Endothelial cell of umbilical vein (primary cell): ENCODE measurements at regions of chr22 and their contacts with region 1.

Region 1: DNA sequence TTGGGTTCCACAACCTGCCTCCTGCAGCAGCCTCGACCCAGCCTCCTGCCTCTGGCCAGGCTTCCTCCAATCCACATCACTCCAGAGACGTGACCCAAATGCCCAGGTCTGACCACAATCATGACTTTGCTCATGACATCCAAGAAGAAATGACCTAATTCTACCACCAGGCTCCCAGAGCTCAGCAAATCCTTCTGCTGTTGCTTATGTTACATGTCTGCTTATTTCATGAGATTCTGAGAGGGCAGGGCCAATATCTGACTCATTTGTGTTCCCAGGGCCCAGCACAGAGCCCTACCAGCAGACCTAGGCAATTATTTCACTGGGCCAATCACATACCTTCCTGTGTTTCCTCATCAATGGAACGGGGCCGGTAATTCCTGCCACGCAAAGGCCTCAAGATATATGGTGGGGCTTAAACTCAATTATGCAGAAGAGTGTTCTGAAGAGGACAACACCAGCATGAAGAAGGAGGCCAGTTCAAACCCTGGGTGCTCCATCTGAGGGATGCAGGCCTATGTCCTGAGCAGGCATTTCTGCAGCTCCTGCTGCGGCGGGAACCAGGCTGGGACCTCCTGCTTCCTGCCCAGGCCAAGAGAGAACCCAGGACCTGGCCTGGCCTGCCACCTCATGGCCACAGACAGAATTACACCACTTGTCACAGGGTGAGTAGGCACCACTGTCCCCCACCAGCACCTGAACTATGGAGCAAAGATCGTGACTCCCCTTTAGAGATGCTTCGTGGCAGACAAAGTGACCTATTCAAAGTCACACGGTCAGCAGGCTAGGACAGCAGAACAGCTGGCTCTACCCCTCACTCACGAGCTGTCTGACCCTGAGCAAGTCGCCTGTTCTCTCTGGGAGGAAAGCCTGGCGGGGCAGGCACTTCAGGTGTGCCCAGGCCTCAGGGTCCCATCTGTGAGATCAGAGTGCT is 5.9 kb downstream of the CENPM start:
- DNase-seq: peak; percentile 75
- H3K4me3 ChIP-seq: no peak overlapping the region
- H3K27ac ChIP-seq: no peak overlapping the region
- H3K4me1 ChIP-seq: peaks cover 29% of the 10 kb centered on the region
- H3K27me3 ChIP-seq: no peaks in the 10 kb centered on the region
- CTCF ChIP-seq: peak; percentile 83 to 89
- POLR2A ChIP-seq: no peak

Region 2: GRCh38 chr22:41739576-41739975 is 201.5 kb before region 1 on chr22:
- CTCF ChIA-PET with region 1: interaction called, 23 read pairs
- POLR2A ChIA-PET with region 1: no interaction called
- dilution Hi-C with region 1: no loop called
- intact Hi-C with region 1: no loop called
- DNase-seq: no peak
- H3K4me3 ChIP-seq: no peak overlapping the region
- H3K27ac ChIP-seq: no peak overlapping the region
- H3K4me1 ChIP-seq: no peaks in the 10 kb centered on the region
- H3K27me3 ChIP-seq: peaks cover 5 to 11% of the 10 kb centered on the region in 2 experiments
- CTCF ChIP-seq: no peak
- POLR2A ChIP-seq: no peak

Region 3: DNA sequence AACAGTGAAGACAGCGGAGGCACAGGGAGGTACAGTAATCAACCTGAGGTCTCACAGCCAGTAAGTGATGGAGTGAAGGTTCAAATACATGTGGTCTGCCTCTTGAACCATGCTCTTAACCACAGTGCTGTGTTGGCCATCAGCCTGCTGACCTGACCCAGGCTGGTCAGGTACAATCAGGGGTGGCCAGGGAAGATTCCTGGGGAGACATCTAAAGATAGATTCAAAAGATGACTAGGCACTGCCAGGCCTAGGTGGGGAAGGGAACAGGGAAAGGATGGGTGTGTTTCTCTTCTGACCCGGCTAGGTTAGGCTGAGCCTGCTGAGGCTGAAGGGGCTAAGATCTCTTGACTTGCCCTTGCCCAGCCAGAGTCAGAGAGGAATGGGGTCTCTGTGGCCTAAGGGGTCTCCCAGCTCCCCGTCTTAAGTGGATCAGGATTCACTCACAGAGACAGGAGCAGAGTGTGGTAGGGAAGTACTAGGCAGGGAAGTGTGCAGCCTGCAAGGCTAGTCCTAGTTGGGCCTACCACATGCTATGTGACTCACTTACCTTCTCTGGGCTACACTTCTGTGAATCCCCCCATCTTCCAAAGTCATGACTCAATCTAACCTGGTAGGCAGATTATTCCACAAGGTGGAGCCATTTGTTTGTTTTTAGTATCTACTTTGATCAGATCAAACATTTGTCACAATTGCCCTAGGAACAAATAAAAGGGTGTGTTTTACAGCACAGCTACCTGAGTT is 118.6 kb before region 1 on chr22:
- CTCF ChIA-PET with region 1: interaction called, 55 read pairs
- POLR2A ChIA-PET with region 1: no interaction called
- dilution Hi-C with region 1: no loop called
- intact Hi-C with region 1: loop called (anchors 1 kb)
- DNase-seq: peak; percentile 65
- H3K4me3 ChIP-seq: no peak overlapping the region
- H3K27ac ChIP-seq: no peak overlapping the region
- H3K4me1 ChIP-seq: peaks cover 3% of the 10 kb centered on the region
- H3K27me3 ChIP-seq: no peaks in the 10 kb centered on the region
- CTCF ChIP-seq: peak; percentile 17 to 29
- POLR2A ChIP-seq: no peak

Region 4: DNA sequence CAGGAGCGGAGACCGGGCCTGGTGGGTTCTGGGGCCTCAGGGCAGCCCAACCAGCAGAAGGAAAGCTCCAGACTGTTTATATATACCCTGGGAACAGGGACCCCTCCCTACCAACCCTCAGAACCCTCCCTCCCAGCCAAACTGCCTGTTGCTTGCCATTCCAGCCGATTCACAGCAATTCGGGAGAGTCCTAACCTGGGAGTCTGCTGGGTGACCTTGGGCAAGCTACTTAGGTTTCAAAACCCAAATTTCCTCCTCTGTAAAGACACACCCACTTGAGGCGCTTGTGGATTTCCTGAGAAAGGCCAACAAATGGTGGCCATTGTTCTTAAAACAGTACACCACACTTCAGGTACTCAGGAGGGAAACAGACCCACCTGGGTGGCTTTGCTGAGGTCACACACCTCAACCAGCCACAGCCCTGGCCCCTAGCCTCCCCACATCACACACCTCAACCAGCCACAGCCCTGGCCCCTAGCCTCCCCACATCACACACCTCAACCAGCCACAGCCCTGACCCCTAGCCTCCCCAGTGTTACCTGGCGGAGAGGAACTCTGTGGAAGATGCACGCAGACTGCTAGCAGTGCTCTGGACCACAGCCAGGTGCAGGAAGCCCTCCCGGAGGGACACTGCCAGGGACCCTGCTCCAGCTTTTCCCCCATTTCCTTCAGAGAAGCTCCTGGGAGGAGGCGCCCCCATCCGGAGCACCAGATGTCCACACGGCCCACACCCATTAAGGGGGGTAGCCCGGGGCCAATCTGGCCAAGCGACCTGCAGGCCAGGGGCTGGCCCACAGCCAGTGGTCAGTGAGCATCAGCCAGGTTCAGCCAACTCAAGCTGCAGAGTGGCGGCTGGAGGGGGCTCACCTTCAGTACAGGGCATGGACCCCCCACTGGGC is 32.4 kb before region 1 on chr22:
- CTCF ChIA-PET with region 1: interaction called, 16 read pairs
- POLR2A ChIA-PET with region 1: no interaction called
- dilution Hi-C with region 1: no loop called
- intact Hi-C with region 1: no loop called
- DNase-seq: no peak
- H3K4me3 ChIP-seq: no peak overlapping the region
- H3K27ac ChIP-seq: no peak overlapping the region
- H3K4me1 ChIP-seq: peaks cover 6% of the 10 kb centered on the region
- H3K27me3 ChIP-seq: peaks cover 29 to 41% of the 10 kb centered on the region in 2 experiments
- CTCF ChIP-seq: no peak
- POLR2A ChIP-seq: no peak

Region 5: DNA sequence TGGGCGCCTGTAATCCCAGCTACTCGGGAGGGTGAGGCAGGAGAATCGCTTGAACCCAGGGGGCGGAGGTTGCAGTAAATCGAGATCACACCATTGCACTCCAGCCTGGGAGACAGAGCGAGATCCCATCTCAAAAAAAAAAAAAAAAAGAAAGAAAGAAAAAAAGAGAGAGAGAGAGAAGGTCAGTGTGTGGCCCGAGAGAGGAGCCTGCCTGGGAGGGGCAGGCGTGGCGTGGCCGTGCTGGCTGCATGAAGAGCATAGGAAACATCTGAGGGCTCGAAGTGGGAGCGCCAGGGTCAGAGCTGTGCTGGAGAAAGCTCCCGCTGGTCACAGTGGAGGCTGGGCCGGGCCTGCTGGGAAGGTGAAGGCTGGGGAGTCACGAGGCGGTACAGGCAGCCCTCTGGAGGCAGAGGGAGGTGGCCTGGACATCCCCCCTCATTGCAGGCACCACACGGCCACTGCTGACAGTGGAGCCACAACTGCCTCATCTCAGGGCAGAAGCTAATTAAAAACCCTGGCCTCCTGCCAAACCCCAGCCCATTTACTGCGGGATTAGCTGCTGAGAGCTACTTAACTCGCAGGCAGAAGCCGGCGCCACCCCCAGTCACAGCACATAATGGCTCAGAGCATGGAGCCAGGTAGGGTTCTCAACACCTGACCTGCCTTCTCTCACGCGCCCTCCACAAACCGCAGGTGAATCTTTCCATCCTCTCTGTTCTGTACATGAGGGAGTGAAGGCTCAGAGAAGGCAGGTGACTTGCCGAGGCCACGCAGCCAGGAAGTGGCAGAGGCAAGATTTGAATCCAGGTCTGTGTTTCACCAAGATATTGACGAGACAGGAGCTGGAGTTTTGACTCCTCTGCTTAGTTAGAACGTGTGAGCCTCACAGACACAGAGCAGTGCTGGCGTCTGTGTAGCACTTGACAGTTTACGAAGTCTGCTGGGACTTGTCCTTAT is 458.5 kb after region 1 on chr22:
- CTCF ChIA-PET with region 1: no interaction called
- POLR2A ChIA-PET with region 1: no interaction called
- dilution Hi-C with region 1: no loop called
- intact Hi-C with region 1: no loop called
- DNase-seq: no peak
- H3K4me3 ChIP-seq: no peak overlapping the region
- H3K27ac ChIP-seq: no peak overlapping the region
- H3K4me1 ChIP-seq: no peaks in the 10 kb centered on the region
- H3K27me3 ChIP-seq: peaks cover 0 to 2% of the 10 kb centered on the region in 2 experiments
- CTCF ChIP-seq: no peak
- POLR2A ChIP-seq: no peak